Head of caudate nucleus (tissue), 42 donors: ENCODE measurements at regions of chr12 and their contacts with region 1.

Region 1: GRCh38 chr12:125065021-125065795 is at the start of gene AACS:
- DNase-seq: peak; percentile 34 to 93 (median 84)

Region 2: GRCh38 chr12:124992874-124993625 is 72.2 kb before region 1 on chr12:
- intact Hi-C with region 1: loop called (anchors 5 kb)
- DNase-seq: peak; percentile 42 to 89 (median 68)

Region 3: DNA sequence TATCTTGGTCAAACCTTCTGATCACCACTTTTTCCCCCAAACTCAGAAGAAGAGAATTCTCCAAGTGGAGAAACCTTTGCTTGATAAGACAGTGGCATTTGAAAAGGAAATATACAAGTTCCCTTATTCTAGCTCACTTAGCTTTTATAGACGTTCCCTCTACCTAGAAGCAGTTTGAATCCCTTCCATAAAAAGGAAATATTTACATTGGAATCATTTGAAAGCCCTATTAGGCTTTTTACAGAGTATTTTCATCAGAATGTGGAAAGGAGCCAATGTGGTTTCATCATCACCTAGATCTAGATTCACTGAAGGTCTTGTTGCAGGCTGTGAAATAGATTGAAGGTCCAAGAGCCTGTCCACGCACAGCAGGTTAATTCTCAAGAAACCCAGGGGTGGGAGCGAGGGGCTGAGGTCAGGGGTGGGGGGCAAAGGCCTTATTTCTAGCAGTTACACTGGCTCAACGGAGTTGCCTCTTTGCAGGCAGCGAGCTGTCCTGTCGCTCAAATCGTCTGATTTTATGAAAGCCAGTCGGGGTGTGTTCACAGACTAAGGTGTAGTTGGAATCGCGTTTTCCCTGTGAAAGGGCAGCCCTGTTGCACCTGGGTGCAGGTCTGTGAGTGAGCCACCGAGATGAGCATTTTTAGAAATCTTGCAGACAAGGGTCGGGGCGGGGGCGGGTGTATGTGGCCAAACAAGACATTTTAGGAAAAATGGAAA is 45.6 kb after region 1 on chr12:
- intact Hi-C with region 1: no loop called
- DNase-seq: no peak